ENCODE measurements at regions of chr16 and their contacts with region 1.

Region 1: GRCh38 chr16:27455700-27456099 is 53.7 kb downstream of the IL21R start:
- DNase-seq: no peak
- H3K4me3 Mint-ChIP-seq: no peak overlapping the region
- H3K27ac Mint-ChIP-seq: no peak overlapping the region
- H3K4me1 Mint-ChIP-seq: no peaks in the 10 kb centered on the region
- H3K27me3 Mint-ChIP-seq: peaks cover 30% of the 10 kb centered on the region
- CTCF ChIP-seq: no peak

Region 2: DNA sequence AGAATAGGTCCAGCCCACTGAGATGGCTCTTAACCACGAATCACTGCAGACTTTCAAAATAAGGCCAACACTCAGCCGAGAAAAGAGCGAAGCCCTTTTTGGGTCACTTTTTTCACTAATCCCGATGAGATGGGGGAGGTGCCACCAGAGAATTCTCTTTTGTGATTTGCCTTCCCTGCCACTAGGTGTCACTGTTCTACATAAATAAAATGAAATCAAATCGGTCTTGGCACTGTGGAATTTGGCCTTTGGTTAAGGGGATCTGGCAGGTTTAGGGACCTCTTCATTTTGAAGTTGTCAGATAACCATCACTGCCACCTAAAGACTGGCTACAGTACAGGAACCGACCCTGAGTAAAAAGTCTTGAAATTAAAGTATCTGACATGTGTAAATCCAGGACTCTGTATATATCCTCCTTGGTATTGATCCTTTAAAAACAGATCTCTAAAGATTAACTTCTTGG is 1616.9 kb before region 1 on chr16:
- CTCF ChIA-PET with region 1: no interaction called
- intact Hi-C with region 1: loop called (anchors 5 kb)
- DNase-seq: peak; percentile 12
- H3K4me3 Mint-ChIP-seq: no peak overlapping the region
- H3K27ac Mint-ChIP-seq: no peak overlapping the region
- H3K4me1 Mint-ChIP-seq: no peaks in the 10 kb centered on the region
- H3K27me3 Mint-ChIP-seq: peaks cover 15% of the 10 kb centered on the region
- CTCF ChIP-seq: peak; percentile 64

Region 3: GRCh38 chr16:27374804-27375425 is 80.8 kb before region 1 on chr16:
- CTCF ChIA-PET with region 1: no interaction called
- intact Hi-C with region 1: loop called (anchors 5 kb)
- DNase-seq: peak; percentile 76
- H3K4me3 Mint-ChIP-seq: no peak overlapping the region
- H3K27ac Mint-ChIP-seq: no peak overlapping the region
- H3K4me1 Mint-ChIP-seq: no peaks in the 10 kb centered on the region
- H3K27me3 Mint-ChIP-seq: peaks cover 28% of the 10 kb centered on the region
- CTCF ChIP-seq: peak; percentile 66